Caco-2 (cell line): ENCODE measurements at regions of chr16 and their contacts with region 1.

Region 1: GRCh38 chr16:48054881-48055601 is 100.8 kb downstream of the ABCC12 start:
- DNase-seq: peak; percentile 44 to 47
- H3K4me3 ChIP-seq: no peak overlapping the region
- H3K4me3 Mint-ChIP-seq: no peak overlapping the region
- H3K27ac Mint-ChIP-seq: peak overlapping the region; percentile 57
- H3K4me1 ChIP-seq: peaks cover 35% of the 10 kb centered on the region
- H3K4me1 Mint-ChIP-seq: peaks cover 25% of the 10 kb centered on the region
- H3K27me3 ChIP-seq: no peaks in the 10 kb centered on the region
- H3K27me3 Mint-ChIP-seq: no peaks in the 10 kb centered on the region
- CTCF ChIP-seq: peak; percentile 64 to 82

Region 2: GRCh38 chr16:47970291-47970931 is 84.6 kb before region 1 on chr16:
- CTCF ChIA-PET with region 1: no interaction called
- POLR2A ChIA-PET with region 1: no interaction called
- intact Hi-C with region 1: loop called (anchors 10 kb)
- DNase-seq: peak in 1 of 2 experiments; percentile 53
- H3K4me3 ChIP-seq: no peak overlapping the region
- H3K4me3 Mint-ChIP-seq: no peak overlapping the region
- H3K27ac Mint-ChIP-seq: no peak overlapping the region
- H3K4me1 ChIP-seq: no peaks in the 10 kb centered on the region
- H3K4me1 Mint-ChIP-seq: no peaks in the 10 kb centered on the region
- H3K27me3 ChIP-seq: no peaks in the 10 kb centered on the region
- H3K27me3 Mint-ChIP-seq: no peaks in the 10 kb centered on the region
- CTCF ChIP-seq: no peak